CD8-positive, alpha-beta memory T cell (primary cell): ENCODE measurements at regions of chr1 and their contacts with region 1.

Region 1: GRCh38 chr1:27603681-27604578 is at the start of gene AHDC1:
- DNase-seq: peak; percentile 88 to 94 (median 90)
- H3K4me3 ChIP-seq: peak within 1 kb of the TSS; percentile 72
- H3K4me3 Mint-ChIP-seq: peak within 1 kb of the TSS; percentile 86 to 95 (median 91)
- H3K27ac ChIP-seq: peak within 1 kb of the TSS; percentile 81
- H3K27ac Mint-ChIP-seq: peak within 1 kb of the TSS; percentile 74 to 98 (median 92)
- H3K4me1 ChIP-seq: peaks cover 52% of the 10 kb centered on the region
- H3K4me1 Mint-ChIP-seq: peaks cover 36 to 58% (median 44%) of the 10 kb centered on the region in 3 donors
- H3K27me3 ChIP-seq: no peaks in the 10 kb centered on the region
- H3K27me3 Mint-ChIP-seq: no peaks in the 10 kb centered on the region
- total RNA-seq, gene AHDC1: 11.5 TPM

Region 2: DNA sequence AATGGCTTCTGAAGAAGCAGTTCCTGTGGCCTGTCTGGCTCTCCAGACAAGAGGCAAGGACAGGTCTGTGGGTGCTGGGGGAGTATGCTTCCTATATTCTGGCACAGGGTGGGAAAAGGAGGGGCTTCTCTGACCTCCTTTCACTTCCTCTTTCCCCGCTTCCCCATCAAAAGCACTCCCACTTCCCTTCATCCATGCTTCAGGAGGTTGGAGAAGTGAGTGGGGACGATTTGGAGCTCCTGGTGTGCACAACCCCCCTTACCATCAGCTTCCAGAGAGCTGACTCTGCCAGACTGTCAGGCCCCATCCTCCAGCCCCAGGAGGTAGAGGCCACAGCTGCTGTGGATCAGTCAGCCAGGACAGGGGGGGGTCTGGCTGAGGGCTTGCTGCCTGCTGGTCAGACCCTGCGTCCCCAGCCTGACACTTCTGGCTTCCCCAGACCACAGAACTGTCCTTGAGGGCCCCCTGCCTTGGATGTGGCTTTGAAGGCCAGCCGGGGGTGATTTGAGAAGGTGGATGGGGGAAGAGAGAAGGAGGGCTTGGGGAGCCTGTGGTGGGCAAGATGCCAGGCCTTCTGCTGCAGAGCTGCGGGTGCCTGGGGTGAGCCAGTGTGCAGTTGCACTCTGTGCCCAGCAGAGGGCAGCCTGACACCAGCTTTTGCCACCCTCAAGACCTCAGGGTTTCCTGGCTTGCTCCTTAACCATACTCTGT is 303.4 kb before region 1 on chr1:
- CTCF ChIA-PET with region 1: interaction called, 13 read pairs
- POLR2A ChIA-PET with region 1: no interaction called
- DNase-seq: peak; percentile 64 to 82 (median 72)
- H3K4me3 ChIP-seq: no peak overlapping the region
- H3K4me3 Mint-ChIP-seq: no peak overlapping the region
- H3K27ac ChIP-seq: no peak overlapping the region
- H3K27ac Mint-ChIP-seq: peak overlapping the region in 4 of 8 donors; percentile 27 to 74 (median 36)
- H3K4me1 ChIP-seq: no peaks in the 10 kb centered on the region
- H3K4me1 Mint-ChIP-seq: peaks cover 0 to 6% (median 4%) of the 10 kb centered on the region in 3 donors
- H3K27me3 ChIP-seq: no peaks in the 10 kb centered on the region
- H3K27me3 Mint-ChIP-seq: no peaks in the 10 kb centered on the region

Region 3: DNA sequence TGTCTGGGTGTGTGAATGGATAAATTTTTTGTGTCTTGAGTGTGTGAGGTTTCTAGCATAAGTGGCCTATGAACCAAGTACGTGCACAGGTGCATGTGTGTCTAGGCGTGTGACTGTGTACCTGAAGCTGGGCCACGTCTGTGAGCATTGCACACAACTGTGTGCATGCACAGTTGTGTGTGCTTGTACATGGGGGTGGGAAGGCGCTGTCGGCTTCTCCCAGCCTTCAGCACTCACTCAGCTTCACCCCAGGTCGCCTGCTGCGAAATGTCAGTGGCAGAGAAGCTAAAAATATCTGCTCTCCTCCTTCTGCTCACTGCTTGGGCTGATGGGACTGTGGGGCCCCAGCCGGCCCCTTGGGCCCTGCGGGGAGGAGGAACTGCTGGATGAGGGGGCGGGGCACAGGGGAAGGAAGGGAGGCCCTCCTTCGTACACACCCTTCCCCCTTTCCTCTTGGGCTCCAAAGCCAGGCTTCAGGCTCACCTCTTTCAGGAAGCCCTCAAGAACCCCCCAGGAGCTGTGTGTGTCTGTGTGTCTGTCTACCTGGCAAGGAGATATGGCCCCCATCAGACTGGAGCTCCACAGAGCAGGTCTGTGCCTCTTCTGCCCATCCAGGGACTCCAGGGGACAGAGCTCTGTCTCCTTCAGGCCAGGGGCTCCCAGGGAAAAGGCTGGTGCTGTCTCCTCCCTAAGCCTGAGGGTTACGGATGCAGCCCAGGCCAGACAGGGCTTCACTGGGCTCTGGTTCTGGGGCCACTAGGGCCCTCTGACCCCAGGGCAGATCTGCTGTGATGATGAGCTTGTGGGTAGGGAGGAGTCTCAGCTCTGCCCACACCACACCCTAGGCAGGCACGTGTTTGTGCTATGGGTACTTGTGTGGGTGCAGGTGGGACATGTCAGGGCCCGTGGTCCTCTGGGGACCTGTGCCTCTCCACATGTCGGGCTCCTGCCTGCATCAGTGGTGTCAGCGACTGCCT is 78.3 kb before region 1 on chr1:
- CTCF ChIA-PET with region 1: interaction called, 15 read pairs
- POLR2A ChIA-PET with region 1: interaction called, 5 read pairs
- DNase-seq: peak in 3 of 5 donors; percentile 10 to 60 (median 30)
- H3K4me3 ChIP-seq: peak overlapping the region; percentile 35
- H3K4me3 Mint-ChIP-seq: peak overlapping the region; percentile 42 to 86 (median 74)
- H3K27ac ChIP-seq: peak overlapping the region; percentile 63
- H3K27ac Mint-ChIP-seq: peak overlapping the region; percentile 51 to 95 (median 88)
- H3K4me1 ChIP-seq: peaks cover 79% of the 10 kb centered on the region
- H3K4me1 Mint-ChIP-seq: peaks cover 67 to 79% (median 70%) of the 10 kb centered on the region in 3 donors
- H3K27me3 ChIP-seq: no peaks in the 10 kb centered on the region
- H3K27me3 Mint-ChIP-seq: no peaks in the 10 kb centered on the region

Region 4: DNA sequence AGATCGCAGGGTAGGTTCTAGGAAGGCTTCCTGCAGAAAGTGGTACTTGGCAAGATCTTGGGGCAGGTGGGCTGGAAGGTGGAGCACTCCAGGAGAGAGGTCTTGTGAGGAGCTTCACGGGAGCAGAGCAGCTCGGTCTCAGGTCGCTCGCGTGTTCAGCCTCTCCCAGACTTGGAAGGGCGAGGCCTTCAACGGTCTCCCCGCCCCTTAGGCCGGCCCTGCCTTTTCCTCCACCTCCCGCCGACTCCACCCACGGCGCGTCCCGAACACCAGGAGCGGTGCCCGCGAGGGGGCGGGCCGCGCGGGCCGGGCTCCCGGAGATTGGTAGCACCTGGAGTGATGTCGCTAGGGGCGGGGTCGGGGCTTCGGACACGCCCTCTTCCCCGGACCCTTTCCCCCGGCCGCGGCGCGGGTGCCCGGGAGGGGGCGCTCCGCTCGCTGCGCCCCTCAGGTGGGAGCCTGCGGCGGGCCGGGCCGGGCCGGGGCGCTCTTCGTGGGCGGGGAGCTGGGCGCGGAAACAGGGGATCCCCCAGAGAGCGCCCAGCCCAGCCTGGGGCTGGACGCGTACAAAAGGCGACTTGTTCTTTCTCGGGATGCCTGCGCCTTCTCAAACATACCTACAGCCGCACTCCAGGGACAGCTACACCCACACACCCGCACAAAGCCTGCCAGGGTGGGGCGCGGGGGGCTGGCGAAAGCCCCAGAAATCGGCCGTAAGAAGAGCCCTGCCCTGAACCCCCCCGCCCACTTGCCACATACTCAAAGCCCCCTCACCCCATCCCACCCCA is 35.4 kb before region 1 on chr1:
- CTCF ChIA-PET with region 1: interaction called, 33 read pairs
- POLR2A ChIA-PET with region 1: interaction called, 3 read pairs
- DNase-seq: peak; percentile 91 to 94 (median 92)
- H3K4me3 ChIP-seq: peak overlapping the region; percentile 30
- H3K4me3 Mint-ChIP-seq: peak overlapping the region; percentile 8 to 83 (median 78)
- H3K27ac ChIP-seq: no peak overlapping the region
- H3K27ac Mint-ChIP-seq: peak overlapping the region; percentile 57 to 97 (median 92)
- H3K4me1 ChIP-seq: peaks cover 38% of the 10 kb centered on the region
- H3K4me1 Mint-ChIP-seq: peaks cover 25 to 33% (median 26%) of the 10 kb centered on the region in 3 donors
- H3K27me3 ChIP-seq: no peaks in the 10 kb centered on the region
- H3K27me3 Mint-ChIP-seq: no peaks in the 10 kb centered on the region

Region 5: GRCh38 chr1:27643701-27644625 is 40.0 kb after region 1 on chr1:
- CTCF ChIA-PET with region 1: interaction called, 15 read pairs
- POLR2A ChIA-PET with region 1: interaction called, 3 read pairs
- DNase-seq: peak; percentile 53 to 82 (median 64)
- H3K4me3 ChIP-seq: no peak overlapping the region
- H3K4me3 Mint-ChIP-seq: no peak overlapping the region
- H3K27ac ChIP-seq: no peak overlapping the region
- H3K27ac Mint-ChIP-seq: peak overlapping the region; percentile 23 to 81 (median 60)
- H3K4me1 ChIP-seq: peaks cover 14% of the 10 kb centered on the region
- H3K4me1 Mint-ChIP-seq: peaks cover 14 to 19% (median 15%) of the 10 kb centered on the region in 3 donors
- H3K27me3 ChIP-seq: no peaks in the 10 kb centered on the region
- H3K27me3 Mint-ChIP-seq: peaks cover 0 to 1% of the 10 kb centered on the region in 2 donors

Region 6: DNA sequence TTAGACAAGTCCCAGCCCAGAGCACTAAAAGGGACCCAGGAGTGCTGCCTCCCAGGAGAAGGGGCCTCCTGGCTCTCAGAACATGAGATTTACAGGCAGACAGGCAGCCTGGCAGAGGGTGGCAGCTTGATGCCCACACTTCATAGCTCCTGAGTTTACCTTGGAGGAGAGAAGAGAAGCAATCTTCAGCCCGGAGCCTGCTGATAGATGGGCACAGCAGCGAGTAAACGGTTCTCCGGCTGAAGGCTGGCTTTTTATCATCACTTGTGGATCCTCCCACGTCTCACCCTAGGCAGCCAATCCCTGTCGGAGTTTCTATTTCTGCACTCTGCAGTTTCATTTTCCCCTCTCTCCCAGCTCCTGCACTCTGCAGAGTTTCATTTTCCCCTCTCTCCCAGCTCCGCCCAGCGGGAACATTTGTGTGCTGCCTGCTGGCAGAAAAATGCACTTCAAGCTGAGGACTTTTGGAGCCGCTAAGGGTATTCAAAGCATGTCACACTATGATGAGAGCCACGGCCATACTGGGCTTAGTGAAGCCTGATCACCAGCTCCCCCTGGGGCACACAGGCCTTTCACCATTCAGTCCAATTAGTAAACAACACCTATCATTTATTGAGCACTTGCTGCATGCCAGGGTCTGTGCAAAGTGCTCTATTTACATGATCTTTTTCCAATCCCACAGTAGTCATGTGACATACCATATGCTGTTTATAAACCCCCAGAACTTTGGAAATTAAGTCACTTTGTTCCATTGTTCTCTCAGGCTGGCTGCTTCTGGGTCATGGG is 68.2 kb after region 1 on chr1 and contains the start of gene IFI6:
- CTCF ChIA-PET with region 1: interaction called, 77 read pairs
- POLR2A ChIA-PET with region 1: no interaction called
- DNase-seq: peak; percentile 64 to 84 (median 82)
- H3K4me3 ChIP-seq: peak within 1 kb of the TSS; percentile 68
- H3K4me3 Mint-ChIP-seq: peak within 1 kb of the TSS; percentile 89 to 98 (median 94)
- H3K27ac ChIP-seq: peak within 1 kb of the TSS; percentile 70
- H3K27ac Mint-ChIP-seq: peak within 1 kb of the TSS; percentile 91 to 100 (median 98)
- H3K4me1 ChIP-seq: peaks cover 29% of the 10 kb centered on the region
- H3K4me1 Mint-ChIP-seq: peaks cover 33 to 38% (median 34%) of the 10 kb centered on the region in 3 donors
- H3K27me3 ChIP-seq: no peaks in the 10 kb centered on the region
- H3K27me3 Mint-ChIP-seq: no peaks in the 10 kb centered on the region
- total RNA-seq, gene IFI6: 10.7 to 12.3 TPM

Region 7: DNA sequence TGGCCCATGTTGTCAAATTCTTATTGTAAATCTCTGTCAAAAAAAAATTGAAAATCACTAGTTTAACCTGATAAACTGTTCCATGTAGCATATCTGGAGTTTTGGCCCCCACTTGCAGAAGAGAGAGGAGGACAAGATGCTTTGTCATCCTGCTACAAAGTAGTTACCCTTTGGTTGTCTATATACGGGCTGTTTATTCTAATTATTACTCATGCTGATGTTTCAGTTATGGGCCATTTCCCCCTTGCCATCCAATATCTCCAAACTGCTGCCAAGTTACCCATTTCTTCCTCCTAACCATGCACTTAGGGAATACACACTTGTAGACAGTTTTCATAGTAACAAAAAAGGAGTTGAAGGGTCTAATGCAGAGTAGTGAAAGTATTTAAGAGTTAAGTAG is 191.7 kb after region 1 on chr1:
- CTCF ChIA-PET with region 1: no interaction called
- POLR2A ChIA-PET with region 1: no interaction called
- DNase-seq: no peak
- H3K4me3 ChIP-seq: no peak overlapping the region
- H3K4me3 Mint-ChIP-seq: no peak overlapping the region
- H3K27ac ChIP-seq: no peak overlapping the region
- H3K27ac Mint-ChIP-seq: peak overlapping the region in 2 of 8 donors; percentile 4 to 65
- H3K4me1 ChIP-seq: no peaks in the 10 kb centered on the region
- H3K4me1 Mint-ChIP-seq: peaks cover 0 to 4% (median 0%) of the 10 kb centered on the region in 3 donors
- H3K27me3 ChIP-seq: no peaks in the 10 kb centered on the region
- H3K27me3 Mint-ChIP-seq: no peaks in the 10 kb centered on the region